ENCODE measurements at regions of chr10 and their contacts with region 1.

Region 1: GRCh38 chr10:88990384-88991160 is at the start of gene FAS:
- DNase-seq: peak; percentile 80
- ATAC-seq: peak; percentile 75
- H3K4me3 ChIP-seq: peak within 1 kb of the TSS; percentile 83
- H3K27ac ChIP-seq: peak within 1 kb of the TSS; percentile 98
- H3K4me1 ChIP-seq: peaks cover 13% of the 10 kb centered on the region
- H3K27me3 ChIP-seq: no peaks in the 10 kb centered on the region
- CTCF ChIP-seq: no peak
- EP300 ChIP-seq: peak in 1 of 2 experiments; percentile 32; a peak in 1 of 4 replicates
- POLR2A ChIP-seq: peak; percentile 86
- RAD21 ChIP-seq: no peak
- polyA plus RNA-seq, gene FAS: 50.1 to 54.9 TPM

Region 2: DNA sequence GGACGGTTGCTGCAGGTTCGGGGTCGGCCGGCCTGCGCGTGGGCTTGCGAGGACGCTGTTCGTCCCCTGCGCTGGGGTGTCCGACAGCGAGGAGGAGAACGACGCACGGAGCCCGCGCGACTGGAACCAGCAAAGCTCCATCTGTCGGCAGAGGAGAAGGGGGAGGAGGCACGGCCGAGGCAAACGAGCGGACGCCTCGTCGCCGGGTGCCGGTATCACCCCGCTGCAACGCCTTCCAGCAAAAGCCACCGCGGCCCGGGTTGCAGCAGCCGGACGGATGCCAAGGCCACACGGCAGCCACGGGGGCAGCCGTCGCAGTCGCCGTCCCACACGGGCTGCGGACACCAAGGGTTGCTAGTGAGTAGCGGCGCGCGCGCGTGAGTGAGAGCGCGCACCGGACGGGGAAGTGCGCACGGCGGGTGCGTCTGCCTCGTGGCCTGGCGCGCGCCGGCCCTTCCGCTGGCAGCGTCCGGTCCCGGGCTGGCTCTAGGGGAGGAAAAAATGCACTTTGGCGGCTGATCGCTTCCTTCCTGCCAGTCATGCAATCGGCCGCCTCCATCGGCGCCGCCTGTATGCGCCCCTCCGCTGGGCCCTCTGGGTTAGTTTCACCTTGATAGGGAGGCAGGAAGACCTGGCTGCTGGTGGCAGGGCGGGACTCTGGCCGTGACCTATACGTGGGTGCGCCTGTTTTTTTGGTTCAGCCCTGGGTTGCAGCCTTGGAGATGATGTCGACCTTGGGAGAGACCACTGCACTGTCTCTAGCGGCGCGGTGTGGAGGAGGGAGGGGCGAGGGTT is 110.1 kb before region 1 on chr10:
- CTCF ChIA-PET with region 1: interaction called, 39 read pairs
- POLR2A ChIA-PET with region 1: interaction called, 21 read pairs
- RAD21 ChIA-PET with region 1: interaction called, 48 read pairs
- SMC1A ChIA-PET with region 1: interaction called, 76 read pairs
- in situ Hi-C with region 1: no loop called
- intact Hi-C with region 1: loop called (anchors 5 kb)
- DNase-seq: peak; percentile 70
- ATAC-seq: peak; percentile 84
- H3K4me3 ChIP-seq: peak overlapping the region; percentile 89
- H3K27ac ChIP-seq: peak overlapping the region; percentile 82
- H3K4me1 ChIP-seq: peaks cover 20% of the 10 kb centered on the region
- H3K27me3 ChIP-seq: no peaks in the 10 kb centered on the region
- CTCF ChIP-seq: peak in 2 of 3 experiments; percentile 22 to 23; a peak in 3 of 6 replicates
- EP300 ChIP-seq: 0 out of 4 replicates have a peak, but pooled peaks of 1 of the 2 experiments have one; percentile 36
- POLR2A ChIP-seq: peak; percentile 96
- RAD21 ChIP-seq: 0 out of 2 replicates have a peak, but pooled peaks have one; percentile 5

Region 3: GRCh38 chr10:88901206-88901983 is 89.2 kb before region 1 on chr10:
- CTCF ChIA-PET with region 1: interaction called, 9 read pairs
- POLR2A ChIA-PET with region 1: interaction called, 27 read pairs
- RAD21 ChIA-PET with region 1: interaction called, 66 read pairs
- SMC1A ChIA-PET with region 1: interaction called, 20 read pairs
- in situ Hi-C with region 1: no loop called
- intact Hi-C with region 1: no loop called
- DNase-seq: peak; percentile 94
- ATAC-seq: peak; percentile 89
- H3K4me3 ChIP-seq: peak overlapping the region; percentile 26; the same call in 1 of the 2 replicates
- H3K27ac ChIP-seq: peak overlapping the region; percentile 99
- H3K4me1 ChIP-seq: peaks cover 50% of the 10 kb centered on the region
- H3K27me3 ChIP-seq: no peaks in the 10 kb centered on the region
- CTCF ChIP-seq: no peak
- EP300 ChIP-seq: peak; percentile 84 to 97
- POLR2A ChIP-seq: no peak
- RAD21 ChIP-seq: peak; percentile 15; the same call in 1 of the 2 replicates

Region 4: DNA sequence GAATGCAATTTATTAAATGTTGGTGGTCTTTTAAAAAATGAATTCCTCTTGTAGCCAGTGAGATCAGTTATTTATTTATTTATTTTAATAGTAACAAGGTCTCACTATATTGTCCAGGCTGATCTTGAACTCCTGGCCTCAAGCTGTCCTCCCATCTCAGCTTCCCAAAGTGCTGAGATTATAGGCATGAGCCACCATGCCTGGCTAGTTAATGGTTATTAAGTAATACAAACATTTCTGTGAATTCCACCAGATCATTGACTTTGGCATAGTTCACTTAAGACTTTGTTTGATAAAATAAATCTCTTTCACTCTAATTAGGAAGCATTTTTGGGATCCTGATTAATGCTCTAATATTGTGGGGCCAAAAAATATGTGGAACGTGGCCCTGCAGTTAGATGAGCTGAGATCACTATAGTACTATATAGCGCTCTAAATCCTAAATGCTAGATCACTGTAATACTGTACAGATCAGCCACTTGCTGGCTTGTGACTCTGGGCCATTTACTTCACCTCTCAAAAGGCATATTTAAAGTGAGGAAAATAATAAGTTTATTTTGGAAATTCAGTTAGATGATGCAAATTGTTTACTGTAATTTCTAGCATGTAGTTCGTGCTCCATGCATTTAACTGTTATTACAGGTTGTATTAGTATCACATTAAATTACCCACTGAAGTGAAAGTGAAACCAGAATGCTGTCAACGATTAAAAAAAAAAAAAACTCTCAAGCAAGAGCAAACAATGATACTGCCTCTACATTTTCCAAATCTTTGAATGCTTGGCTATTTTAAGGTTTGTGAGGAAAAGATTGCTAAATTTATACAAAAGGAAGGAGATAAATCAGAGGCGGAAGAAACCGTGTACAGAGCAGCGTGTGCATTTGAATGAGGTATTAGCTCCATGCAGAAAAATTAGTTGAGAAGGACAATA is 15.9 kb before region 1 on chr10:
- CTCF ChIA-PET with region 1: interaction called, 10 read pairs
- POLR2A ChIA-PET with region 1: interaction called, 3 read pairs
- RAD21 ChIA-PET with region 1: interaction called, 5 read pairs
- SMC1A ChIA-PET with region 1: interaction called, 11 read pairs
- in situ Hi-C with region 1: no loop called
- intact Hi-C with region 1: no loop called
- DNase-seq: no peak
- ATAC-seq: peak; percentile 55
- H3K4me3 ChIP-seq: peak overlapping the region; percentile 41; the same call in 1 of the 2 replicates
- H3K27ac ChIP-seq: peak overlapping the region; percentile 49; the same call in 1 of the 2 replicates
- H3K4me1 ChIP-seq: no peaks in the 10 kb centered on the region
- H3K27me3 ChIP-seq: no peaks in the 10 kb centered on the region
- CTCF ChIP-seq: no peak
- EP300 ChIP-seq: no peak
- POLR2A ChIP-seq: no peak
- RAD21 ChIP-seq: no peak

Region 5: DNA sequence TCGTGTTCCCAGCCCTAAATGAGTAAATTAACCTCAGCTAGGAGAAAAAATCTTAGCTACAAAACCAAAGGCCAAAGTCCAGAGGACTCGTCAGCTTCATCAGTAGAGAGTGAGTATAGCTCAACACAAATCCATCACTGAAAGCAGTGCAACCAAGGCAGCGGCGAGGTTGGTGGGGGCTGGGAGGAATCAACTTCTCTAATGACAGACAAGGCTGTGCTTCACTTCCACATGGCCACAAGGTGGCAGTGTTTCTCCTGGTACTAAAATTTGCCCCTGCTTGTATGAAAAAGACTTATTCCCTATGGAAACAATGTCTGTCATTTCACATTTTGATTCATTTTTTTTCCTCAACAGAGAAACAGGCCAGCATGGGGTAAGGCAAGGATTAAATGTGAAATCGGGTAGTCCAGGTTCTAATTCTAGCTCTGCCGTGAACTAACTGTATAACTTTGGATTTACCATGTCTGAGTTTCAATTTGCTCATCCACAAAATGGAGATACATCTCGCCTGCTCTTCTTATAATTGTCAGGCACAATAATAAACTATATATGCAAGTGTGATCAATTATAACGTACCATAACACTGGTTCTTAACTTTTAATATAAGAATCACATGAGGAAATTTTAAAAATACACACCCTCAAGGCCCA is 39.3 kb after region 1 on chr10:
- CTCF ChIA-PET with region 1: interaction called, 29 read pairs
- POLR2A ChIA-PET with region 1: interaction called, 7 read pairs
- RAD21 ChIA-PET with region 1: interaction called, 16 read pairs
- SMC1A ChIA-PET with region 1: interaction called, 10 read pairs
- in situ Hi-C with region 1: no loop called
- intact Hi-C with region 1: no loop called
- DNase-seq: peak; percentile 24
- ATAC-seq: peak; percentile 70
- H3K4me3 ChIP-seq: no peak overlapping the region
- H3K27ac ChIP-seq: no peak overlapping the region
- H3K4me1 ChIP-seq: peaks cover 26% of the 10 kb centered on the region
- H3K27me3 ChIP-seq: no peaks in the 10 kb centered on the region
- CTCF ChIP-seq: peak; percentile 76 to 90 (median 82)
- EP300 ChIP-seq: no peak
- POLR2A ChIP-seq: no peak
- RAD21 ChIP-seq: peak; percentile 86

Region 6: DNA sequence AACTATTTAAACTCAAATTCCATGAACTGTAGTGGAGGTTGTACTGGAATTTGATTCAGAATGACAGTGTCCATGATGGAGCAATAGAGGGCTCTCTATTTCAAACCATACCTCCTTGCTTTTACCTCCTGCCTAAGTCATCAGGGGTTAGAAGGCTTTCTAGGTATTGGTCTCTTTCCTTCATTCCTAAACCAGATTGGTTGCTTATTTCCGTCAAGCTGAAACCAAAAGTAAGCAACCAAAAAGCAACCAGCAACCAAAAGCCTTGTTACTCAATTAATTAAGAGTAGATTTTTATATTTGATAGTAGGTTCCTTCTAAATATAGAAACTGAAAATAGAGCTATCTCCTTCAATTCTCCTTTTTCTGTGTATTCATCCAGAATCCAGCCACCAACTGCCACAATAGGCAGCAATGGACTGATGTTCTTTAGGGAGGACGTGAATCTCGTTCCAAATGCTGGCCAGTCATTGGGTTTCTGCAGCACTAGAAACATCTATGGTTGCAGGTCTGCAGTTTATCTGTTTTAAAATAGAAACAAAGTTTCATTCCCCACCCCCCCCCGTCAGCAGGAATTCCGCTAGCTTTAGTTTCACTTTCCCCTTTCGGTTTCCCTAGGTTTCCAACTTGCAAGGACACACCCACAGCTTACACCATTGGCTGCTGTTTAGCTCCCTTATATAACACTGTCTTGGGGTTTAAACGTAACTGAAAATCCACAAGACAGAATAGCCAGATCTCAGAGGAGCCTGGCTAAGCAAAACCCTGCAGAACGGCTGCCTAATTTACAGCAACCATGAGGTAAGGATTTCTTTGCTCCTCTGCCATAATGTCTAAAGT is 401.6 kb after region 1 on chr10 and contains the start of gene IFIT1:
- CTCF ChIA-PET with region 1: no interaction called
- POLR2A ChIA-PET with region 1: no interaction called
- RAD21 ChIA-PET with region 1: no interaction called
- SMC1A ChIA-PET with region 1: no interaction called
- in situ Hi-C with region 1: no loop called
- intact Hi-C with region 1: loop called (anchors 10 kb)
- DNase-seq: peak; percentile 80
- ATAC-seq: peak; percentile 94
- H3K4me3 ChIP-seq: peak within 1 kb of the TSS; percentile 67
- H3K27ac ChIP-seq: peak within 1 kb of the TSS; percentile 71
- H3K4me1 ChIP-seq: no peaks in the 10 kb centered on the region; the same call in 1 of the 2 replicates
- H3K27me3 ChIP-seq: no peaks in the 10 kb centered on the region
- CTCF ChIP-seq: no peak
- EP300 ChIP-seq: no peak
- POLR2A ChIP-seq: peak; percentile 63
- RAD21 ChIP-seq: no peak
- polyA plus RNA-seq, gene IFIT1: 28.9 to 37.2 TPM